ENCODE measurements at regions of chr5 and their contacts with region 1.

Region 1: DNA sequence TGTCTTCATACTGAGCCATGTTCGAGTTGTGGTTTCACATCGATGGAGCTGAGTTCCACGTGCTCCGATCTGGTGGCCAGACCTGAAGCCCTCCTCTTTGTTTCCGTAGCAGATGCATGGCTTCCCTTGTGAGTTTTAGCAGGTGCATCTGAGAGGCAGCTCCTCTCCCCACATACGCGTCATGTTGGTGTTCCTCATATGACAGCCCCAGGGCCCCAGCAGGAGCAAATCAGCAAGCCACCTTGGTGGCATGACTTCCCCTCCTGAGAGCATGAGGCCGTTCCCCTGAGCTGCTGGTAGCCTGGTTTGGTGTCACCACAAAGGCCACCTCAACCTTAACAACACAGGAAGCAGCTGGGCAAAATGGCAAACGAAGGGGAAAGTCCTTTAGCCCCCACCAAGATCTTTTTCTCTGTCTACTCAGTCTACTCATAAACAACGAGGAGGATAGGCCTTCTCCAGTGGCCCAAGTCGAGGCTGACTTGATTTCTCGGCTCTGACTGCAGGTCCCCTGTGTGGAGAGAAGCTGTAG is 5.9 kb downstream of the CYFIP2 start:
- DNase-seq: peak; percentile 96
- H3K4me3 Mint-ChIP-seq: peak overlapping the region; percentile 74
- H3K27ac Mint-ChIP-seq: peak overlapping the region; percentile 99
- H3K4me1 Mint-ChIP-seq: peaks cover 79% of the 10 kb centered on the region
- H3K27me3 Mint-ChIP-seq: no peaks in the 10 kb centered on the region

Region 2: DNA sequence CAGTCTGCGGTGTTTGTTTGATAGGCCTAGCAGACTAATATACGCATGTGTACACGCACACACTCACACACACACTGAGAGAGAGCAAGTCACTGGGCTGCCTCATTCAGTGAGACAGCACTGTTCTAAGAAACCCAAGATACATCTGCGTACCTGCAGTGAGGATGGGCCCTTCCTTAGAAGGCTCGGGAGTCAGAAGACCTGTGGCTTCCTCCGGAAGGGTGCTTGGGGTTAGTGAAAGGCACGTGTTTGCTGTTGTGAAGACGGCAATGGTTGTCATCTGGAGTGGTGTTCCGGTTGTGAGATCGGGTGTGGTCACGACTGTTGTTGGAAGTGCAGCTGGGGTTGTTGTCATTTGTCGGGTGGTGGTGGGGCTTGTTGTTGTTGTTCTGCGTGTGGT is 320.4 kb before region 1 on chr5:
- CTCF ChIA-PET with region 1: no interaction called
- intact Hi-C with region 1: no loop called
- DNase-seq: no peak
- H3K4me3 Mint-ChIP-seq: no peak overlapping the region
- H3K27ac Mint-ChIP-seq: no peak overlapping the region
- H3K4me1 Mint-ChIP-seq: peaks cover 6% of the 10 kb centered on the region
- H3K27me3 Mint-ChIP-seq: no peaks in the 10 kb centered on the region

Region 3: DNA sequence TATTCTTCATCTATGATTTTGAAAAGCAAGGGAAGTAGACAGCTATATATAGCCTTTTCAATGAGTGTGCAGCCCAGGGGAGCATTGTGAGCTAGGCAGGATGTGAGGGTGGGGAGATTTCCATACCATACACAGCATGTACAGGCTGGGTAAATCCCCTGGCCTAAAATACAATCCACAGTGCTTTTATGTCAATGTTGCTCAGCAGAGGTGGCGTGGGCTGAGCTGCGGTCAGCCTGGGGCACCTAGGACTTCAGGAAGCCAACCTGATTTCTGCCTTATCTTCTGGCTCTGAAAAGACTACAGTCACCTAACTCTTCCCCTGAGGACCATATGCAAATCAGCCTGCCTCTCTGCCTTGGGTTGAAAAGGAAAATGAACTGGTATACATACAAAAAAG is 99.4 kb before region 1 on chr5:
- CTCF ChIA-PET with region 1: interaction called, 3 read pairs
- intact Hi-C with region 1: loop called (anchors 1 kb)
- DNase-seq: peak; percentile 96
- H3K4me3 Mint-ChIP-seq: peak overlapping the region; percentile 64
- H3K27ac Mint-ChIP-seq: peak overlapping the region; percentile 100
- H3K4me1 Mint-ChIP-seq: peaks cover 86% of the 10 kb centered on the region
- H3K27me3 Mint-ChIP-seq: no peaks in the 10 kb centered on the region

Region 4: GRCh38 chr5:157247267-157247666 is 24.5 kb before region 1 on chr5:
- CTCF ChIA-PET with region 1: interaction called, 18 read pairs
- intact Hi-C with region 1: loop called (anchors 1 kb)
- DNase-seq: peak; percentile 80
- H3K4me3 Mint-ChIP-seq: peak overlapping the region; percentile 24
- H3K27ac Mint-ChIP-seq: peak overlapping the region; percentile 96
- H3K4me1 Mint-ChIP-seq: peaks cover 94% of the 10 kb centered on the region
- H3K27me3 Mint-ChIP-seq: no peaks in the 10 kb centered on the region

Region 5: DNA sequence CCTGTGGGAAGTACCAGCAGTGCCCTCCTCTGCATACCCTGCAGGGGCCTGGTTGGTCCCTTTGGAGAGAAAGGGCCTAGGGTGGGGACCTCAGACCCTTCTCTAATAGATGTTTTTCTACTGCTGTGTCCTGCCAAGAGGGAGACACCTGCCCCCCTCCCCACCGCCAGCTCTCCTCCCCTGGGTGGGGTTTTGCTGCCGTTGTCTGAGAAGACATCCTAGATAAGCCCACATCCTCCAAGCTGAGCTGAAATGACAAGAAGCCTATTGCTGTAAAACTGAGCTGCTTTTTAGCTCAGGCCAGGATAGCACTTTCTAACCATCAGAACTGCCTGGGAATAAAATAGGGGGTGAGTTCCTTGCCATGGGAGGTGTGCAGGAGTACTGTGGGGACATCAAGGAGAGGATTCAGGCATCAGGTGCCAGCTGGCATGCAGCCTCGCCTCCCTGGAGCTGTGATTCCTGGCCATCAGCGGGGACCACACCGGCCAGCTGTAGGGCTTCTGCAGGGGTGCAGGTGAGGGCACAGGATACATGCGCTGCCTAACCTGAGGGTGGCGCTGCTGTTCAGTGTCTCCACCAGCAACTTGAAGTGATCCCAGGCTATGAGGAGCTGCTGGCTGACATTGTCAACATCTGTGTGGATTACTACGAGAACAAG is 32.0 kb after region 1 on chr5:
- CTCF ChIA-PET with region 1: interaction called, 10 read pairs
- intact Hi-C with region 1: no loop called
- DNase-seq: peak; percentile 82
- H3K4me3 Mint-ChIP-seq: no peak overlapping the region
- H3K27ac Mint-ChIP-seq: peak overlapping the region; percentile 81
- H3K4me1 Mint-ChIP-seq: peaks cover 72% of the 10 kb centered on the region
- H3K27me3 Mint-ChIP-seq: no peaks in the 10 kb centered on the region

Region 6: GRCh38 chr5:157731272-157732129 is 459.7 kb after region 1 on chr5 and contains the start of gene THG1L:
- CTCF ChIA-PET with region 1: interaction called, 4 read pairs
- intact Hi-C with region 1: loop called (anchors 2 kb)
- DNase-seq: peak; percentile 100
- H3K4me3 Mint-ChIP-seq: peak within 1 kb of the TSS; percentile 97
- H3K27ac Mint-ChIP-seq: peak within 1 kb of the TSS; percentile 95
- H3K4me1 Mint-ChIP-seq: peaks cover 25% of the 10 kb centered on the region
- H3K27me3 Mint-ChIP-seq: no peaks in the 10 kb centered on the region
- total RNA-seq, gene THG1L: 28.1 to 30.2 TPM

Measured in activated naive CD4-positive, alpha-beta T cell treated with anti-CD3 and anti-CD28 coated beads for 36 hours (primary cell).